AG04450 (cell line): ENCODE measurements at regions of chr14 and their contacts with region 1.

Region 1: GRCh38 chr14:73503648-73504047 is 12.9 kb downstream of the RIOX1 start:
- DNase-seq: peak; percentile 10
- H3K4me3 ChIP-seq: no peak overlapping the region
- H3K27ac ChIP-seq: no peak overlapping the region
- H3K27me3 ChIP-seq: no peaks in the 10 kb centered on the region
- CTCF ChIP-seq: no peak

Region 2: DNA sequence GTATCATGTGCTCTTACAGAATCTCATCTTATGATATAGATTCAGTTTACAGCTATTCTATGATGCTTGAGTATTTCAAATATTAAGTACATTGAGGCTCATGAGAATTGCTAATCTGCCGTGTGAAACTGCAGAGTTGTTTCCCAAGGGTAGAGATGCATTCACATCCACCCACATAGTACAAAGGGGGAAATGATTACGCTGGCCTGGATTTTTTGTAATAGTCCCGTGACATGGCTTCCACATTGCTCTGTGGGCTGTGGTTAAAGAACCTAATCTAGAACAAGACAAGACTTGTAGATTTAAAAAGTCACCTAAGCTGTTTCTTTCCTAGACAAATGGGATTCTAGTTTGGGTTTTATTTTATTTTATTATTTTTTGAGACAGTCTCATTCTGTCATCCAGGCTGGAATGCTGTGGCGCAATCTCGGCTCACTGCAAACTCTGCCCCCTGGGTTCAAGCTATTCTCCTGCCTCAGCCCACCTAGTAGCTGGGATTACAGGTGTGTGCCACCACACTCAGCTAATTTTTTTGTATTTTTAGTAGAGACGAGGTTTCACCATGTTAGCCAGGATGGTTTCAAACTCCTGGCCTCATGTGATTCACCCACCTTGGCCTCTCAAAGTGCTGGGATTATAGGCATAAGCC is 25.9 kb before region 1 on chr14:
- CTCF ChIA-PET with region 1: no interaction called
- POLR2A ChIA-PET with region 1: no interaction called
- DNase-seq: no peak
- H3K4me3 ChIP-seq: no peak overlapping the region
- H3K27ac ChIP-seq: peak overlapping the region; percentile 2
- H3K27me3 ChIP-seq: no peaks in the 10 kb centered on the region
- CTCF ChIP-seq: no peak

Region 3: DNA sequence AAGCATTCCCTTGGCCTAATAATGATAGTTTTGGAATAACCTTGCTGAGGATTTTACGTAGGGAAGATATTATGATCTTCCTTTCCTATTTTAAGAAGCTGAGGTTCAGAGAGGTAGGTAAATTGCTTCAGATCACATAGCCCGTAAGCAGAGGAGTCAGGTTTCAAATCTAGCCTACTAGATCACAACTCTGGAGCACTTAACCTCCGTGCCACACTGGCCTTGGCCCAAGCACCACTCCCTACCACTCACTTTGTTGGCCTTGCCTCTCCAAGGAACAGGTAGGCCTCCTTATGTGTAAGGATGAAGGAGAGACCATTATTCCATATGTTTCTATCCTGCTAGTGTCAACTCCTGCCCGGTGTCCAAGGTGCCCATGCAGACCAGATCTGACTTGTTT is 20.8 kb after region 1 on chr14:
- CTCF ChIA-PET with region 1: interaction called, 16 read pairs
- POLR2A ChIA-PET with region 1: no interaction called
- DNase-seq: no peak
- H3K4me3 ChIP-seq: no peak overlapping the region
- H3K27ac ChIP-seq: no peak overlapping the region
- H3K27me3 ChIP-seq: peaks cover 3% of the 10 kb centered on the region
- CTCF ChIP-seq: no peak

Region 4: DNA sequence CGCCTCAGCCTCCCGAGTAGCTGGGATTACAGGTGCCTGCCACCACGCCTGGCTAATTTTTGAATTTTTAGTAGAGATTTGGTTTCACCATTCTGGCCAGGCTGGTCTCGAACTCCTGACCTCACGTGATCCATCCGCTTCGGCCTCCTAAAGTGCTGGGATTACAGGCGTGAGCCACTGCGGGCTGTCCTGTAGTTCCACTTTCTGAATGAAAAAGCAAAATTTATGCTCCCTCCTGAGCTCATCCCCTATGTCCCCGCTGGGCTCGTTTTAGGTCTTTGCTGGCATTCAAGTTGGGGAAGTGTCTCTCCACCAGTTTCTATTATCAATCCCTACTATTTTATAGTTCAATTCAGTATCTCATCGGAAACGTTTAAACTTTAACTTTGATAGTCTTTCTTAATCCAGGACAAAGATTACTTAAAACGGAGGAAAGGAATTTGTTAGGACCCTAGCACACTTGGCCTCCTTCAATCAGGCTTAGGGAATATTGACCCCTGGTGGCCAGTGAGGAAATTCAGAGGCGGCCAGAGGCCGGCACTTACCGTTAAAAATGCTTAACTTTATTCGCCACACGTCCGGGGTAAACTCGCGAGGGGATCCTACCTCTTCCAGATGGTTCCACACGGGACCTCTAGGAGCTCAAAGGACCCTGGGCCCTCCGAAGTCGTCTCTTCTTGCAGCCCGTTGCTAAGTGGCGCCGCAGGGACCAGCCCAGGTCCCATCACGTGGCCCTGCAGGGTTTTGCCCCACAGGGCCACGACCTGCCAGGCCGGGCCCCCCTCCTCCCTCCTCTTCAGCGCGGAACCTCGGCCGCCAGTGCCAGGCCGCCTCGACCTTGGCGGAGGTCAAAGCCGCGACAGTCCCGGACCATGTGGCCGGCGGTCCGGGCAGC is 129.7 kb after region 1 on chr14:
- CTCF ChIA-PET with region 1: interaction called, 86 read pairs
- POLR2A ChIA-PET with region 1: no interaction called
- DNase-seq: peak; percentile 37
- H3K4me3 ChIP-seq: peak overlapping the region; percentile 46
- H3K27ac ChIP-seq: no peak overlapping the region
- H3K27me3 ChIP-seq: no peaks in the 10 kb centered on the region
- CTCF ChIP-seq: peak; percentile 92